Right ventricle myocardium inferior (tissue), 1 donor: ENCODE measurements at regions of chr19 and their contacts with region 1.

Region 1: DNA sequence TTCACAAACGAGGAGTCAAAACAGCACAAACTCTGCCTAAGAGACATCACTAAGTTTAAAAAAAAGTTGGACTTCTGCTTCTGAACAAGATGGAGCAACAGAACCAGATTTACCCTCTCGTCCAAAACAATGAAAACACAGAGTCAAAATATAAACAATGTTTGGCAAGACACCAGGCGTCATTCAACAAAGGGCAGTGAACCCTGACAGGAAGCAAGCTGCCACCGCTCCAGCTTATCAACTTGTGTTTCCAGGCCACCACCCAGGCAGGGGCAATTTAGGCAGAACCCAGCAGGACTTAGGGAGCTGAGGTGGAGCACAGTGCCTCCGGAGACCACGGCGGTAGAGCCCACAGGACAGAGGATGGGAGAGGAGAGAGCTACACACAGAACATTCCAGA is 8.6 kb upstream of the NAPA start:
- DNase-seq: no peak
- ATAC-seq: peak; percentile 65

Region 2: GRCh38 chr19:47494729-47495128 is 28.7 kb before region 1 on chr19:
- intact Hi-C with region 1: no loop called
- DNase-seq: no peak
- ATAC-seq: no peak

Region 3: GRCh38 chr19:47600246-47601179 is 77.0 kb after region 1 on chr19:
- intact Hi-C with region 1: loop called (anchors 2 kb)
- DNase-seq: peak; percentile 100
- ATAC-seq: peak; percentile 99